A673 (cell line): ENCODE measurements at regions of chr11 and their contacts with region 1.

Region 1: GRCh38 chr11:43557553-43558110 is 122.9 kb upstream of the HSD17B12 start:
- DNase-seq: peak; percentile 56
- H3K4me3 ChIP-seq: peak overlapping the region; percentile 12
- H3K27ac ChIP-seq: no peak overlapping the region
- H3K4me1 ChIP-seq: peaks cover 13% of the 10 kb centered on the region
- H3K27me3 ChIP-seq: peaks cover 97% of the 10 kb centered on the region
- CTCF ChIP-seq: peak; percentile 61

Region 2: DNA sequence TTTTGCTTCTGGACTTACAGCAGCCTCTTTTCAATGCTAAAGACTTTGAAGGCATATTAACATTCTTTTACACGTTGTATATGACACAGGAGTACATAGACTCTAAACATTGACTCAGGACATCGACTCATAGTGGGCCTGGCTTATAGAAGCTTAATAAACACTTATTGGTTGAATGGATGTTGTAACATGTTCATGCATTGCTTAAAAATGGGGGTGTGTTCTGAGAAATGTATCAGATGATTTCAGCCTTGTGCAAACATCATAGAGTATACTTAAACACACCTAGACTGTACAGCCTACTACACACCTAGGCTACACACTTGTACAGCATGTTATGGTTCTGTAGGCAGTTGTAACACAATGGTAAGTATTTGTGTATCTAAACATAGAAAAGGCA is 181.0 kb before region 1 on chr11:
- CTCF ChIA-PET with region 1: no interaction called
- POLR2A ChIA-PET with region 1: no interaction called
- intact Hi-C with region 1: no loop called
- DNase-seq: peak; percentile 27
- H3K4me3 ChIP-seq: no peak overlapping the region
- H3K27ac ChIP-seq: no peak overlapping the region
- H3K4me1 ChIP-seq: no peaks in the 10 kb centered on the region
- H3K27me3 ChIP-seq: no peaks in the 10 kb centered on the region
- CTCF ChIP-seq: no peak

Region 3: DNA sequence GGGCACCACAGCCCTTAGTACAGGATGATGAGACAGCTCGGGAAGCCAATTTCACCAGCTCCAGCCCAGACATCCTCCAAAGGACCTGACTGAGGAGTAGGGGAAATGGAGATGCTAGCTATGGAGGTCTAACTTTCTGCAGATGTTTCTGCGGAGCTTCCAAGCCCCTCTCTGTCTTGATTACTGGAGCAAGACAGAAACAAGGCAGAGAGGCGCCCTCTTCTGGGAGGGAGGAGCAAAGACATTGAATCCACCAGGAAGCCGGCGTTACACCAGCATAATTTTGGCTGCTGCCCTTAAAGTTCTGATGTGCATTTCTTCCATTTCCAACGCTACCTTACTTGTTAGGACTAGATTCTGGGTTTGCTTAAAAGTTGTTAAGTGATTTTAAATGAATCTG is 15.6 kb after region 1 on chr11:
- CTCF ChIA-PET with region 1: interaction called, 7 read pairs
- POLR2A ChIA-PET with region 1: no interaction called
- intact Hi-C with region 1: loop called (anchors 2 kb)
- DNase-seq: peak; percentile 88
- H3K4me3 ChIP-seq: no peak overlapping the region
- H3K27ac ChIP-seq: no peak overlapping the region
- H3K4me1 ChIP-seq: peaks cover 25% of the 10 kb centered on the region
- H3K27me3 ChIP-seq: peaks cover 99% of the 10 kb centered on the region
- CTCF ChIP-seq: peak; percentile 99

Region 4: GRCh38 chr11:43819926-43820325 is 262.3 kb after region 1 on chr11:
- CTCF ChIA-PET with region 1: no interaction called
- POLR2A ChIA-PET with region 1: no interaction called
- intact Hi-C with region 1: loop called (anchors 5 kb)
- DNase-seq: no peak
- H3K4me3 ChIP-seq: no peak overlapping the region
- H3K27ac ChIP-seq: no peak overlapping the region
- H3K4me1 ChIP-seq: no peaks in the 10 kb centered on the region
- H3K27me3 ChIP-seq: no peaks in the 10 kb centered on the region
- CTCF ChIP-seq: no peak